Calu3 (cell line): ENCODE measurements at regions of chr22 and their contacts with region 1.

Region 1: GRCh38 chr22:21629262-21630149 is at the start of gene YDJC:
- DNase-seq: peak; percentile 99
- H3K4me3 Mint-ChIP-seq: peak within 1 kb of the TSS; percentile 84
- H3K27ac Mint-ChIP-seq: peak within 1 kb of the TSS; percentile 71
- H3K4me1 Mint-ChIP-seq: peaks cover 20% of the 10 kb centered on the region
- H3K27me3 Mint-ChIP-seq: no peaks in the 10 kb centered on the region
- CTCF ChIP-seq: peak; percentile 69
- total RNA-seq, gene YDJC: 57.9 and 64.2 TPM in 2 replicates

Region 2: GRCh38 chr22:21641789-21642583 is 12.5 kb after region 1 on chr22 and contains the start of gene SDF2L1:
- CTCF ChIA-PET with region 1: interaction called, 42 read pairs
- intact Hi-C with region 1: no loop called
- DNase-seq: peak; percentile 99
- H3K4me3 Mint-ChIP-seq: peak within 1 kb of the TSS; percentile 94
- H3K27ac Mint-ChIP-seq: peak within 1 kb of the TSS; percentile 98
- H3K4me1 Mint-ChIP-seq: peaks cover 34% of the 10 kb centered on the region
- H3K27me3 Mint-ChIP-seq: no peaks in the 10 kb centered on the region
- CTCF ChIP-seq: no peak
- total RNA-seq, gene SDF2L1: 87.0 and 88.2 TPM in 2 replicates